Activated T-helper 1 cell treated with anti-CD3 and anti-CD28 coated beads, Interleukin-12 subunit alpha, Interleukin-12 subunit beta, Interleukin-2, Interleukin-4 antibody, amounts not matched to agents 30 ng/mL and 10 ng/mL and 1 ng/mL, durations not matched to agents 14 hours and 24 hours and 36 hours (primary cell): ENCODE measurements at regions of chr17 and their contacts with region 1.

Region 1: DNA sequence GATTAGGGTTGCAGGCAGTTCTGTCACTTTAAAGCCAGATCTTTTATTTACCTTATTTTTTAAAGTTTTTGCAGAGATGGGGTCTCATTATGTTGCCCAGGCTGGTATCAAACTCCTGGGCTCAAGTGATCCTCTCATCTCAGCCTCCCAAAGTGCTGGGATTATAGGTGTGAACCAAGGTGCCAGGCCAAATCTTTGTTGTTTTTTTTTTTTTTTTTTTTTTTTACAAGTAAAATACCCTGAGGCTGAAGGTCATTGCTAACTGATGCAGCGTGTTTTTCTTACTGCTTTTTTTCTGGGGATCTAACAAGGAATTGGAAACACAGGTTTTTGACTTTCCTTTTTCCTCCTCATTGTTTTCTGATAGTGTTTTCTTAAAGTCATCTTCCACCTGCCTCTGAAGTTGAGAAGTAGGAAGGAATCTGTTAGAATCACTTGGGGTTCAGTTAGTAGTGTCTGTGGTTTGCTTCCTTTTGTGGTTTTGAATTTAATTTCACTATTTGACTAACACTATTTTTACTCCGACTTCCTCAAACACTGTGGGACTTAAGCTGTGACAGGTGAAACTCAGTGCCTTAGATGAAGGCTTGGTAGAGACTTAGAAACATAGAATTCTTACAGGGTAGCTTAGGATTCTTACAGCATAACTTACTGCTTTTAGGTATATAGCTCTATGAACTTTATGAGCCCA is 22.2 kb downstream of the CLTC start:
- DNase-seq: peak; percentile 3
- H3K4me3 Mint-ChIP-seq: peak overlapping the region; percentile 16
- H3K27ac Mint-ChIP-seq: peak overlapping the region; percentile 72
- H3K4me1 Mint-ChIP-seq: peaks cover 50% of the 10 kb centered on the region
- H3K27me3 Mint-ChIP-seq: no peaks in the 10 kb centered on the region

Region 2: GRCh38 chr17:59311130-59311920 is 330.6 kb before region 1 on chr17:
- intact Hi-C with region 1: loop called (anchors 10 kb)
- DNase-seq: peak; percentile 40
- H3K4me3 Mint-ChIP-seq: no peak overlapping the region
- H3K27ac Mint-ChIP-seq: no peak overlapping the region
- H3K4me1 Mint-ChIP-seq: peaks cover 8% of the 10 kb centered on the region
- H3K27me3 Mint-ChIP-seq: no peaks in the 10 kb centered on the region

Region 3: DNA sequence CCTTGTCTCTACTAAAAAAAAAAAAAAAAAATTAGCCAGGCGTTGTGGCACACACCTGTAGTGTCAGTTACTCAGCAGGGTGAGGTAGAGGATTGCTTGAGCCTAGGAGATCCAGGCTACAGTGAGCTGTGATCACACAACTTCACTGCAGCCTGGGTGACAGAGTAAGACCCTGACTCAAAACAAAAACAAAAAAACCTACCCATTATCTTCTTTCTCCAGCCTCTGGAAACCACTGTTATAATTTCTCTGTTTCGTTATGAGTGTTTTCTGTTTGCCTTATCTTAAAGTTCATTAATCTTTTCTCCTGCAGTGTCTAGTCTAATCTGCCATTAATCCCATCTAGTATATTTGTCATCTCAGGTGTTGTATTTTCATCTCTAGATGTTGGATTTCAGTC is 40.8 kb before region 1 on chr17:
- intact Hi-C with region 1: loop called (anchors 5 kb)
- DNase-seq: no peak
- H3K4me3 Mint-ChIP-seq: no peak overlapping the region
- H3K27ac Mint-ChIP-seq: peak overlapping the region; percentile 3
- H3K4me1 Mint-ChIP-seq: peaks cover 14% of the 10 kb centered on the region
- H3K27me3 Mint-ChIP-seq: no peaks in the 10 kb centered on the region

Region 4: GRCh38 chr17:59627770-59628171 is 14.2 kb before region 1 on chr17:
- intact Hi-C with region 1: loop called (anchors 1 kb)
- DNase-seq: no peak
- H3K4me3 Mint-ChIP-seq: no peak overlapping the region
- H3K27ac Mint-ChIP-seq: peak overlapping the region; percentile 75
- H3K4me1 Mint-ChIP-seq: peaks cover 62% of the 10 kb centered on the region
- H3K27me3 Mint-ChIP-seq: no peaks in the 10 kb centered on the region